ENCODE measurements at regions of chr22 and their contacts with region 1.

Region 1: GRCh38 chr22:17213976-17214375 is 5.3 kb downstream of the ADA2 start:
- DNase-seq: peak in 4 of 5 donors; percentile 29 to 48 (median 38)
- H3K4me3 ChIP-seq: no peak overlapping the region
- H3K4me3 Mint-ChIP-seq: peak overlapping the region in 2 of 8 donors; percentile 13 to 54
- H3K27ac ChIP-seq: no peak overlapping the region
- H3K27ac Mint-ChIP-seq: peak overlapping the region in 2 of 7 donors; percentile 25 to 42
- H3K4me1 ChIP-seq: peaks cover 37% of the 10 kb centered on the region
- H3K4me1 Mint-ChIP-seq: peaks cover 29 to 64% (median 46%) of the 10 kb centered on the region in 4 donors
- H3K27me3 ChIP-seq: no peaks in the 10 kb centered on the region
- H3K27me3 Mint-ChIP-seq: no peaks in the 10 kb centered on the region

Region 2: GRCh38 chr22:17121227-17122195 is 92.5 kb before region 1 on chr22 and contains the start of gene TMEM121B:
- CTCF ChIA-PET with region 1: no interaction called
- POLR2A ChIA-PET with region 1: no interaction called
- intact Hi-C with region 1: loop called (anchors 1 kb)
- DNase-seq: no peak
- H3K4me3 ChIP-seq: no peak within 1 kb of the TSS
- H3K4me3 Mint-ChIP-seq: peak within 1 kb of the TSS; percentile 51 to 74 (median 62)
- H3K27ac ChIP-seq: no peak within 1 kb of the TSS
- H3K27ac Mint-ChIP-seq: peak within 1 kb of the TSS in 1 of 7 donors; percentile 23
- H3K4me1 ChIP-seq: peaks cover 44% of the 10 kb centered on the region
- H3K4me1 Mint-ChIP-seq: peaks cover 25 to 39% (median 31%) of the 10 kb centered on the region in 4 donors
- H3K27me3 ChIP-seq: peaks cover 14% of the 10 kb centered on the region
- H3K27me3 Mint-ChIP-seq: peaks cover 8 to 15% of the 10 kb centered on the region in 2 donors
- total RNA-seq, gene TMEM121B: 0.12 TPM in 1 of 2 experiments, not detected in the other

Region 3: GRCh38 chr22:17237038-17237668 is 23.2 kb after region 1 on chr22:
- CTCF ChIA-PET with region 1: interaction called, 3 read pairs
- POLR2A ChIA-PET with region 1: interaction called, 21 read pairs
- intact Hi-C with region 1: loop called (anchors 2 kb)
- DNase-seq: peak in 4 of 5 donors; percentile 33 to 42 (median 41)
- H3K4me3 ChIP-seq: peak overlapping the region; percentile 6 to 58
- H3K4me3 Mint-ChIP-seq: peak overlapping the region; percentile 86 to 95 (median 88)
- H3K27ac ChIP-seq: peak overlapping the region; percentile 50
- H3K27ac Mint-ChIP-seq: peak overlapping the region; percentile 79 to 98 (median 97)
- H3K4me1 ChIP-seq: peaks cover 13% of the 10 kb centered on the region
- H3K4me1 Mint-ChIP-seq: peaks cover 8 to 15% (median 11%) of the 10 kb centered on the region in 4 donors
- H3K27me3 ChIP-seq: no peaks in the 10 kb centered on the region
- H3K27me3 Mint-ChIP-seq: no peaks in the 10 kb centered on the region

Region 4: GRCh38 chr22:17266251-17266971 is 52.4 kb after region 1 on chr22:
- CTCF ChIA-PET with region 1: interaction called, 6 read pairs
- POLR2A ChIA-PET with region 1: interaction called, 20 read pairs
- intact Hi-C with region 1: no loop called
- DNase-seq: peak in 4 of 5 donors; percentile 24 to 39 (median 26)
- H3K4me3 ChIP-seq: no peak overlapping the region
- H3K4me3 Mint-ChIP-seq: peak overlapping the region in 7 of 8 donors; percentile 1 to 65 (median 38)
- H3K27ac ChIP-seq: no peak overlapping the region
- H3K27ac Mint-ChIP-seq: peak overlapping the region in 5 of 7 donors; percentile 68 to 86 (median 83)
- H3K4me1 ChIP-seq: peaks cover 17% of the 10 kb centered on the region
- H3K4me1 Mint-ChIP-seq: peaks cover 8 to 32% (median 16%) of the 10 kb centered on the region in 4 donors
- H3K27me3 ChIP-seq: no peaks in the 10 kb centered on the region
- H3K27me3 Mint-ChIP-seq: no peaks in the 10 kb centered on the region

Region 5: DNA sequence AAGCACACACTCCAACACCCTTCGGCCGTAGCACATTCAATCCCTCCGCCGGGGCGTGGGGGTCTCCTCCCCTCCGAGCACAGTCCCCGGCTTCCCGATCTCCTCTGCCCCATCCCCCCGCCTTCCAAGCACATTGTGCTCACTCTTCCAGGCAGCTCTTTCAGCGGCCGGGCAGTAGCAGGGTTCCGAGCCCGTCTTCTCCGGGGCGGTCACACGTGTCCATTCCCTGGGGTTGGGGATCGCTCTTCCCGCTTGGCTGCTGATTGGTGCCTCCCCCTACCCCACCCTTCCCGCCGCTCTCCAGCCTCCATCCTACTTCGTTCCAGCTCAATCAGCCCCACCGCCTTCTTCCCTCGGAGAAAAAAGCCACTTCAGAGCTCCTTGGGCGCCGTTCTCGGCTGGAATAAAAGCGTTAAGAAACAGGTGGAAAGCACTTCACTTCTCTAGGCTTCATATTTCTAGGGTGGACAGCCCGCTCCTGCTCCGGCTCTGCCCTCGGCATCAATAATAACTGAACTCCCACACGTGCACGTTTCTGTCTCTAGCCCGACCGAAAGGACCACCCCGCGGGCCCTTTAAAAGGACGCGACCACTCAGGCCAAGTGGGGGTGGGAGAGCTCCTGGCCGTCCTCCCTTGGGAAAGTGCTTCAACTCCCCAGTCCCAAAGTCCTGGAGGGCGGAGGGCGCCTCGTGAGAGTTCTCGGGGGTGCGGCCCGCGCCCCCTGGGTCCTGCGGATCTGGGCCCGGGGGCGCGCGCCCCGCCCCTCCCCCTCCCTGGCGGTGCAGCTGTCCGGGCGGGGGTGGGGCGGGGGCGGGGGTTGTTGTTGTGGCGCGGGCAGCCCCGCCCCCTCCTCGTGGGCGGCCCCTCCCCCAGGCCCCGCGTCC is 154.8 kb after region 1 on chr22:
- CTCF ChIA-PET with region 1: interaction called, 3 read pairs
- POLR2A ChIA-PET with region 1: no interaction called
- intact Hi-C with region 1: loop called (anchors 10 kb)
- DNase-seq: peak in 1 of 5 donors; percentile 3
- H3K4me3 ChIP-seq: peak overlapping the region; percentile 18 to 29
- H3K4me3 Mint-ChIP-seq: peak overlapping the region; percentile 73 to 86 (median 80)
- H3K27ac ChIP-seq: no peak overlapping the region
- H3K27ac Mint-ChIP-seq: peak overlapping the region in 1 of 7 donors; percentile 31
- H3K4me1 ChIP-seq: peaks cover 20% of the 10 kb centered on the region
- H3K4me1 Mint-ChIP-seq: peaks cover 20 to 34% (median 27%) of the 10 kb centered on the region in 4 donors
- H3K27me3 ChIP-seq: peaks cover 41% of the 10 kb centered on the region
- H3K27me3 Mint-ChIP-seq: peaks cover 34 to 44% of the 10 kb centered on the region in 2 donors

Measured in CD4-positive, alpha-beta memory T cell (primary cell).